ENCODE measurements at regions of chr13 and their contacts with region 1.

Region 1: GRCh38 chr13:104450006-104450405 is 1383.8 kb upstream of the SLC10A2 start:
- DNase-seq: no peak
- H3K4me3 ChIP-seq: no peak overlapping the region
- H3K27ac ChIP-seq: no peak overlapping the region
- H3K4me1 ChIP-seq: no peaks in the 10 kb centered on the region
- H3K27me3 ChIP-seq: no peaks in the 10 kb centered on the region
- CTCF ChIP-seq: no peak
- EP300 ChIP-seq: no peak
- POLR2A ChIP-seq: no peak

Region 2: DNA sequence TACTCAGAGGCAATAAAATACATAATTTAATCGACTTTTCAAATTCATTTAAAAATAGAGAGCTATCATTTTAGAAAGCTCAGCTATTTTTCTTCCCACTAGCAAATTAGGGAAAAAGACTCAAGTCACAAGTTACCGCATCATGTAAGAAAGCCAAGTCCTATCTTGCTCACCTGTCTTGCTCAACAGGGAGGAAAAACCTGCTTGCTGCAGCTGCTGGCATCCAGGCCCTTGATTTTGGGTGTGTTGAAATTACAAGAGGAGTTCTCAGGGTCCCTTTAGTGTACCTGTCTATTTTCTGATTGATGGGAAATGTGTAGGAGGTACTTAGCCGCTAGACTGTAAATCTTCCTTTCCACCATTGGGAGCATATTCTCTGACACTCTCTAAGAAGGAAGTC is 1406.0 kb before region 1 on chr13:
- in situ Hi-C with region 1: no loop called
- intact Hi-C with region 1: no loop called
- DNase-seq: no peak
- H3K4me3 ChIP-seq: no peak overlapping the region
- H3K27ac ChIP-seq: no peak overlapping the region
- H3K4me1 ChIP-seq: no peaks in the 10 kb centered on the region
- H3K27me3 ChIP-seq: no peaks in the 10 kb centered on the region
- CTCF ChIP-seq: no peak
- EP300 ChIP-seq: no peak
- POLR2A ChIP-seq: no peak

Region 3: DNA sequence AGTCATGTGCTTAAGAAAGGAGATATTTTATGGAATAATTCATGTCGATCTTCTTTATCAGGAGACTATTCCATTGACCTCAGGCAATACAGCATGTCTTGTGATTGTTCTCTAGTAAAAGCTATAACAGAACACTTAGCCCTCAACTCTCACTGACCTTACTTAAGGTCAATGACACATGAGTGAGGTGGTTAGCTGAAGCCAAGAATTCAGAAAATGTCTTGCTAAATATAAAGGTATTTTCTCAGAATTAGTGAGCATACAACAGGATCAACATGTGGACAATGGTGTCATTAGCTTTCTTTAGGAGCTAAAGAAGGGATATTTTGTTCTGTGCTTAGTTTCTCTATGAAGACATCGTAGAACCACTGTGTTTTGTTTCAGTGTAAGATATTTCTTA is 346.6 kb after region 1 on chr13:
- in situ Hi-C with region 1: no loop called
- intact Hi-C with region 1: no loop called
- DNase-seq: no peak
- H3K4me3 ChIP-seq: no peak overlapping the region
- H3K27ac ChIP-seq: no peak overlapping the region
- H3K4me1 ChIP-seq: no peaks in the 10 kb centered on the region
- H3K27me3 ChIP-seq: no peaks in the 10 kb centered on the region
- CTCF ChIP-seq: no peak
- EP300 ChIP-seq: no peak
- POLR2A ChIP-seq: no peak

Region 4: GRCh38 chr13:105874814-105875213 is 1424.8 kb after region 1 on chr13:
- in situ Hi-C with region 1: no loop called
- intact Hi-C with region 1: loop called (anchors 5 kb)
- DNase-seq: no peak
- H3K4me3 ChIP-seq: no peak overlapping the region
- H3K27ac ChIP-seq: no peak overlapping the region
- H3K4me1 ChIP-seq: no peaks in the 10 kb centered on the region
- H3K27me3 ChIP-seq: no peaks in the 10 kb centered on the region
- CTCF ChIP-seq: no peak
- EP300 ChIP-seq: no peak
- POLR2A ChIP-seq: no peak